Esophagus squamous epithelium (tissue), 5 donors: ENCODE measurements at regions of chr7 and their contacts with region 1.

Region 1: DNA sequence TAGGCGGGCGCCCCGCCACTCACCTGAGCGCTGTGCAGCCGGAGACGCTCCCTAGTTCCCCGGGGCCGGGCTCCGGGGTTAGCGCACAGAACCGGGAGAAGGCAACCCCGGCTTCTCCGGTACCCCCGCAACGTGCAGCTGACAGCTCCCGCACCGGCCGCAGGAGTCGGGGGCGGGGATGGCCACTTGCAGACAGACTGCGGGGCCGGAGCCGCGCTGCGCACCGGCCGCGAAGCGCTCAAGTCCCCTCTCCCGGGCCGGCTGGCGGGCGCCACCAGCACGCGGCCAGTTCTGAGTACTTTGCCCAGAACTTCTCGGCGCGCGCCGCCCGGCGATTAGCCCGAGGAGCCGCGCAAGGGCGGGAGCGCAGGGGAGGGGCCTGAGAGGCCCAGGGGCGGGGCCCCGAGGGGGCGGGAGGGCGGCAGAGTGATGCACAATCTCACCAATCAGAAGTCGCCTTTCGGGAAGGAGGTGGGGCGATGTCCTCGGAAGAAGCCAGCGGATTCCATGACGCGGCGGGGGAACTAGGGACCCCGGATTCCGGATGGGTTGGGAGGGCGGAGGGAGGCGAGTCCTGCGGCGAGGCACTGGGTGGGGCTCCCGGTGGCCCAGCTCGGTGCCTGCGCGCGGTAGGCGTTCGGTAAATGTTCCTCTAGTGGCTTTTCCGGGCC is at the start of gene OSBPL3:
- DNase-seq: peak; percentile 78
- H3K4me3 ChIP-seq: peak within 1 kb of the TSS; percentile 73 to 86 (median 84)
- H3K27ac ChIP-seq: peak within 1 kb of the TSS; percentile 92 to 93 (median 92)
- H3K4me1 ChIP-seq: peaks cover 6 to 53% (median 12%) of the 10 kb centered on the region in 3 donors
- H3K27me3 ChIP-seq: no peaks in the 10 kb centered on the region
- CTCF ChIP-seq: no peak
- POLR2A ChIP-seq: peak in 3 of 4 donors; percentile 49 to 89 (median 69)
- total RNA-seq, gene OSBPL3: 8.9 to 22.6 (median 13.7) TPM

Region 2: DNA sequence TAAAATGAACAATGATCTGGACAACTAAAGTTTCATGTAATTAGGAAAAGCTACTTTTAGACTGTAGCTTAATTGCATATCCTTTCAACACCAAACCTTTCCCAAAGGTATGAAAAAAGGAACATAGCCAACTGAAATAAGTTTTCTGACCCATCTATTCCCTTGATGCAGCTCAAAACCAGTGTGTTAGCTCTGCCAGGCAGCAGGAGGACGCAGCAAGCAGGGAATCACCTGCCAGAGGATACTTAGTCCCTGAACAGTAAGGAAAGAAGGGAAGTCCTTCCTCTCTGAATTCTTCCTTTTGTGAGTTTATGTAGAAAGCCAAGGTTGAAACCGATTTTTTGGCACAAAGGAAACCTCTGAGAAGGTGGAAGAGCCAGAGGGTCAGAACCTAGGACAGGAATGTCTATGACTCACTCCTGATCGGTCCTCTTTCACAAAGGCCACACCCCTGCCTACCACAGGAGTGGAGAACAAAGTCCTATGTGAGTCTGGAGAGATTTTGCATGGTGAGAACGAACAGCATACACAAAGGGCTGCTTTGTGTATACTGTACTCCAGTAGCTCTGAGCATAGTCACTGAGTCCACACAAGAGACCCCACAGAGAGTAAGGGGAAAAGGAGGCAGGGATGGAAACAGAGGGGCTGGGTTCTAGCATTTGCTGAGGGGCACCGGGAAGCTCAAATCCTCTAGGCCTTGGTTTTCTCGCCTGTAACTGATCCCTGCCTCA is 153.9 kb before region 1 on chr7:
- intact Hi-C with region 1: loop called (anchors 5 kb)
- DNase-seq: no peak
- H3K4me3 ChIP-seq: peak overlapping the region in 1 of 4 donors; percentile 2
- H3K27ac ChIP-seq: peak overlapping the region; percentile 77 to 87 (median 82)
- H3K4me1 ChIP-seq: peaks cover 6 to 65% (median 35%) of the 10 kb centered on the region in 3 donors
- H3K27me3 ChIP-seq: no peaks in the 10 kb centered on the region
- CTCF ChIP-seq: no peak
- POLR2A ChIP-seq: no peak

Region 3: GRCh38 chr7:25075459-25075858 is 95.5 kb after region 1 on chr7:
- intact Hi-C with region 1: no loop called
- DNase-seq: no peak
- H3K4me3 ChIP-seq: no peak overlapping the region
- H3K27ac ChIP-seq: no peak overlapping the region
- H3K4me1 ChIP-seq: peaks cover 0 to under 1% (median 0%) of the 10 kb centered on the region in 3 donors
- H3K27me3 ChIP-seq: no peaks in the 10 kb centered on the region
- CTCF ChIP-seq: no peak
- POLR2A ChIP-seq: no peak